GM10248 (cell line): ENCODE measurements at regions of chr6 and their contacts with region 1.

Region 1: GRCh38 chr6:83221889-83222479 is 28.8 kb downstream of the RWDD2A start:
- DNase-seq: peak; percentile 24
- CTCF ChIP-seq: peak; percentile 27

Region 2: DNA sequence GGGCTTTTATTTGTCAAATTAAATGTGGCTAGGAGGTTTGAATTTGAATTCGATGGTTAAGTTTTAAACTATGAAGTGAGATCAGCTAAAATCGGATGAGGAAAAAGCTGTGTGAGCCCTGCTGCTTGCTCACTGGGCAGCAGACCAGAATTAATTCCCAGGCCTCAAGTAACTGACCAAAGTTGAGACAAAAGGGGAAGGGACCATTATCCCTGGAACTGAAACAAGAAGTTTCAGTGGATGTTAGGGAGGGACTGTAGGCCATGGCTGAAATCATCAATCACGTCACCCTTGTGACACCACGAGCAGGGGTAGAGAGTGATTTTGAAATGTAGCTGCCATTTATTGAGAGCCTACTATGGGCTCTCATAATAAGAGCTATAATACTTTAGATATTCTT is 283.4 kb after region 1 on chr6:
- CTCF ChIA-PET with region 1: interaction called, 235 read pairs
- POLR2A ChIA-PET with region 1: no interaction called
- DNase-seq: no peak
- CTCF ChIP-seq: no peak

Region 3: DNA sequence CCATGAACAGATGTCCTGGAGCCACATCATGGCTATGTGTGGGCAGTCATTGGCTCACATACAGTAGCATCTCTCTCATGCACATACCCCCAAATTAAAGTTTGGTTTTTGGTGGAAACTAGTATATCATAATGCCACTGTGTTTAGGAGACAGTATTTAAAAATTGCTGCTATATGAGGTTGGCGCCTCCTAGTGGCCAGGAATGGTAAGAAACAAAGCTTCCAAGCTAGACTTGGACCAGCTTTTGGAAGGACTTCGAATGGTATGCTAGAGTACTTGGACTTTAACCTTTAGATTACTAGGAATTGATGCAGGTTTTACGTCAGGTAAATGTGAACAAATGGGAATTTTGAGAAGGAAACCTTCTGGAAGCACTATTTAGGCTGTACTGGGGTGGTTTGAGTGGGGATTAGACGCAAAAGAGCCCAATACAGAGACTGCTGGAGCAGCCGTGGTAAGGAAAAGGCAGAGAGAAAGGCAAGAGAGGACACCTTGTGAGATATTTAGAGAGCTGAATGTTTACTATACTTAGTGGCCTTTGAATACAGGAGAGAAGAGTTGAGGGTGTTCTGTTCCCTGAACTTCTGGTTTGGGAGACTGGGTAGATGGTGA is 314.2 kb after region 1 on chr6:
- CTCF ChIA-PET with region 1: interaction called, 14 read pairs
- POLR2A ChIA-PET with region 1: no interaction called
- DNase-seq: peak; percentile 34
- CTCF ChIP-seq: peak; percentile 75